CD8-positive, alpha-beta T cell (primary cell): ENCODE measurements at regions of chr1 and their contacts with region 1.

Region 1: GRCh38 chr1:60978421-60979357 is 103.7 kb upstream of the NFIA start:
- DNase-seq: peak in 6 of 9 experiments; percentile 24 to 59 (median 46)
- ATAC-seq: peak; percentile 63
- H3K4me3 ChIP-seq: no peak overlapping the region
- H3K4me3 Mint-ChIP-seq: no peak overlapping the region
- H3K27ac ChIP-seq: no peak overlapping the region
- H3K27ac Mint-ChIP-seq: no peak overlapping the region
- H3K4me1 ChIP-seq: no peaks in the 10 kb centered on the region
- H3K4me1 Mint-ChIP-seq: no peaks in the 10 kb centered on the region
- H3K27me3 ChIP-seq: no peaks in the 10 kb centered on the region
- H3K27me3 Mint-ChIP-seq: peaks cover 2% of the 10 kb centered on the region
- CTCF ChIP-seq: peak; percentile 36

Region 2: GRCh38 chr1:61043010-61043820 is 64.5 kb after region 1 on chr1:
- CTCF ChIA-PET with region 1: interaction called, 4 read pairs
- POLR2A ChIA-PET with region 1: no interaction called
- intact Hi-C with region 1: loop called in 1 of 2 experiments (anchors 2 kb)
- DNase-seq: peak; percentile 73 to 89 (median 84)
- ATAC-seq: peak; percentile 98
- H3K4me3 ChIP-seq: peak overlapping the region; percentile 45 to 50
- H3K4me3 Mint-ChIP-seq: peak overlapping the region; percentile 82
- H3K27ac ChIP-seq: no peak overlapping the region
- H3K27ac Mint-ChIP-seq: no peak overlapping the region
- H3K4me1 ChIP-seq: peaks cover 6% of the 10 kb centered on the region
- H3K4me1 Mint-ChIP-seq: peaks cover 6% of the 10 kb centered on the region
- H3K27me3 ChIP-seq: peaks cover 0 to 11% of the 10 kb centered on the region in 2 experiments
- H3K27me3 Mint-ChIP-seq: peaks cover 25% of the 10 kb centered on the region
- CTCF ChIP-seq: peak; percentile 79

Region 3: DNA sequence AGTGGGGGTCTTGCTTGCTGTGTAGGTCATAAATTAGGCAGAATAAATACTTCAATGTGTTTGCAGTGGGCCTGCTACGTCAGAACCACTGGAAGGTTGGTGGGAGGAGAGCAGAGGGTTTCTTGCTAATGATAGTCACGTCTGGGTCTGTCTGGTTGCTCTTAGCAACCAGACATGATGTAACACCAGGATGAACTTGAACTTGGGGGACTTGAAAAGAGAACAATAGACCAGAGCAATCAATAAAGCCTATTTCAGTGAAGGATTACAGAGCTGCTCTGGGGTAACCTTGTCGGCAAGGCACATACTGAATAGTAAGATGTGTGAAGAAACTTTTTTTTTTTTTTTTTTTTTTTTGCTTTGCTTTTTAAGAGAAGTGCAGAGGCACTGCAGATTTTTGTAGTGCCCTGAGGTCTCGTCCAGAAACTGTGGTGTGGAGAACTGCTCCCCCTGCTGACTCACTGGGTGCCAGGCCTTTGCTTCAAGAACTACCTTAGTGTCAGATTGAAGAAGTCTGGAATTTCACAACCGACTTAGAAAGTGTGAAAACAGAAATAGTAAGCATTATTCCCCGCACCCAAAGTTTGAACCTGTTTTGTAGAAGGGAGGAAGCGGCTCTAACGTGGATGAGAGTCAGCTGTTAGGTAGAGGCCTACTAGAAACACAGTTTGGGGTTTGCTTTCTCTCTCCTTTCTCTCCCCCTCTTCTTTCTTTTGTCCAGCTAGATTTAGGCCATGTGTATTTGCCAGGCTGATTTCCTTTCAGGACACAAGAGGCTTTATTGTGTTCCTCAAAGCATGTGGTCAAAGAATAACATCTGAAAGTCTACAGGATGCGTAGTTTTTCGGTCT is 474.6 kb after region 1 on chr1:
- CTCF ChIA-PET with region 1: interaction called, 18 read pairs
- POLR2A ChIA-PET with region 1: no interaction called
- intact Hi-C with region 1: loop called in 1 of 2 experiments (anchors 1 kb)
- DNase-seq: peak; percentile 42 to 81 (median 69)
- ATAC-seq: peak; percentile 87
- H3K4me3 ChIP-seq: no peak overlapping the region
- H3K4me3 Mint-ChIP-seq: no peak overlapping the region
- H3K27ac ChIP-seq: no peak overlapping the region
- H3K27ac Mint-ChIP-seq: peak overlapping the region; percentile 71
- H3K4me1 ChIP-seq: no peaks in the 10 kb centered on the region
- H3K4me1 Mint-ChIP-seq: peaks cover 10% of the 10 kb centered on the region
- H3K27me3 ChIP-seq: no peaks in the 10 kb centered on the region
- H3K27me3 Mint-ChIP-seq: no peaks in the 10 kb centered on the region
- CTCF ChIP-seq: peak; percentile 57

Region 4: GRCh38 chr1:61561666-61562065 is 583.0 kb after region 1 on chr1:
- CTCF ChIA-PET with region 1: no interaction called
- POLR2A ChIA-PET with region 1: no interaction called
- intact Hi-C with region 1: no loop called
- DNase-seq: no peak
- ATAC-seq: no peak
- H3K4me3 ChIP-seq: no peak overlapping the region
- H3K4me3 Mint-ChIP-seq: no peak overlapping the region
- H3K27ac ChIP-seq: no peak overlapping the region
- H3K27ac Mint-ChIP-seq: no peak overlapping the region
- H3K4me1 ChIP-seq: no peaks in the 10 kb centered on the region
- H3K4me1 Mint-ChIP-seq: no peaks in the 10 kb centered on the region
- H3K27me3 ChIP-seq: no peaks in the 10 kb centered on the region
- H3K27me3 Mint-ChIP-seq: peaks cover 2% of the 10 kb centered on the region
- CTCF ChIP-seq: no peak

Region 5: DNA sequence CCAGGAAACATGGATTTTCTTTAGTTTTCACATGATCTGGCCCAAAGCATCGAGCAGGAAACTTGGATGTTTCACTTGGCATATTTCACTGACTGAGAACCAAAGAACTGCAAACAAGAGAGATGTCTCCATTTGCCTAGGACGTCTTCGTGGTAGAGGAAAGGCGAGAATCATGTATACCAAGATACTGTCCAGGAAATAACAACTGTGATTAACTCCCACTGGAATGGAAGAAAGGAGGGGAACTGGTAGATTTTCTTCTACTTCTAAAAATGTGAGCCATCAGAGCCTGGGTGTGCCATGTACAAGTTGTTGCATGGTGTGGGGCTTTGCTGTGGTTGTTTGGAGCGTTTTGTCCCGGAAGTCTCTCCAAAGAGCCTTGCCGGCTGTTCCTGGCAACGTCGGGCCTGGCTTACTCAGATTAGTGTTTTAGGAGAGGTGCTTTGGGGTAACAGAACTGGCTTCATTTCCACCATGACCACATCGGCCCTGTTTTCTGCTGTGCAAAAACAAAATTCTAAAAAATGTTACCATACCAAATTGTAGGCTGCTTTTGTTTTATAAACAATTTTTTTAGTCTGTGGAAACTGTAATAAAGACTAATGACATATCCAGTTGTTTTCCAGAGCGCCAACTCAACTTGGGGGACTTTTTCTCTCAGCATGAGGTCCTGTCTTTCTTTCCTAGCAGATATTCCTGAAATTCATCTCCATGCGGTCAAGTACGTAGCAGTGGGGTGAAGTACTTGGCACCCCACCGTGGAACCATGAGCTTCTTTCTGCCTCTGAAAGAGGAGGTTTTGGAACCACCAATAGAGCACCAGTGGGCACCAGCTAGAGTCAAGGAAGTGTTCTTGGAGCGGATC is 628.0 kb after region 1 on chr1:
- CTCF ChIA-PET with region 1: no interaction called
- POLR2A ChIA-PET with region 1: no interaction called
- intact Hi-C with region 1: loop called in 1 of 2 experiments (anchors 10 kb)
- DNase-seq: no peak
- ATAC-seq: no peak
- H3K4me3 ChIP-seq: no peak overlapping the region
- H3K4me3 Mint-ChIP-seq: no peak overlapping the region
- H3K27ac ChIP-seq: no peak overlapping the region
- H3K27ac Mint-ChIP-seq: no peak overlapping the region
- H3K4me1 ChIP-seq: no peaks in the 10 kb centered on the region
- H3K4me1 Mint-ChIP-seq: no peaks in the 10 kb centered on the region
- H3K27me3 ChIP-seq: no peaks in the 10 kb centered on the region
- H3K27me3 Mint-ChIP-seq: no peaks in the 10 kb centered on the region
- CTCF ChIP-seq: no peak